ENCODE measurements at regions of chr1 and their contacts with region 1.

Region 1: GRCh38 chr1:243946946-243947345 is 96.9 kb upstream of the AKT3 start:
- DNase-seq: peak; percentile 55
- H3K4me3 Mint-ChIP-seq: no peak overlapping the region
- H3K27ac Mint-ChIP-seq: no peak overlapping the region
- H3K4me1 Mint-ChIP-seq: no peaks in the 10 kb centered on the region
- H3K27me3 Mint-ChIP-seq: no peaks in the 10 kb centered on the region
- CTCF ChIP-seq: peak; percentile 59

Region 2: GRCh38 chr1:243708210-243708609 is 238.7 kb before region 1 on chr1:
- CTCF ChIA-PET with region 1: interaction called, 4 read pairs
- POLR2A ChIA-PET with region 1: no interaction called
- intact Hi-C with region 1: loop called (anchors 5 kb)
- DNase-seq: peak; percentile 32
- H3K4me3 Mint-ChIP-seq: no peak overlapping the region
- H3K27ac Mint-ChIP-seq: no peak overlapping the region
- H3K4me1 Mint-ChIP-seq: no peaks in the 10 kb centered on the region
- H3K27me3 Mint-ChIP-seq: no peaks in the 10 kb centered on the region
- CTCF ChIP-seq: peak; percentile 79

Region 3: GRCh38 chr1:243903895-243904294 is 43.1 kb before region 1 on chr1:
- CTCF ChIA-PET with region 1: no interaction called
- POLR2A ChIA-PET with region 1: no interaction called
- intact Hi-C with region 1: no loop called
- DNase-seq: peak; percentile 51
- H3K4me3 Mint-ChIP-seq: no peak overlapping the region
- H3K27ac Mint-ChIP-seq: no peak overlapping the region
- H3K4me1 Mint-ChIP-seq: no peaks in the 10 kb centered on the region
- H3K27me3 Mint-ChIP-seq: peaks cover 65% of the 10 kb centered on the region
- CTCF ChIP-seq: no peak

Region 4: DNA sequence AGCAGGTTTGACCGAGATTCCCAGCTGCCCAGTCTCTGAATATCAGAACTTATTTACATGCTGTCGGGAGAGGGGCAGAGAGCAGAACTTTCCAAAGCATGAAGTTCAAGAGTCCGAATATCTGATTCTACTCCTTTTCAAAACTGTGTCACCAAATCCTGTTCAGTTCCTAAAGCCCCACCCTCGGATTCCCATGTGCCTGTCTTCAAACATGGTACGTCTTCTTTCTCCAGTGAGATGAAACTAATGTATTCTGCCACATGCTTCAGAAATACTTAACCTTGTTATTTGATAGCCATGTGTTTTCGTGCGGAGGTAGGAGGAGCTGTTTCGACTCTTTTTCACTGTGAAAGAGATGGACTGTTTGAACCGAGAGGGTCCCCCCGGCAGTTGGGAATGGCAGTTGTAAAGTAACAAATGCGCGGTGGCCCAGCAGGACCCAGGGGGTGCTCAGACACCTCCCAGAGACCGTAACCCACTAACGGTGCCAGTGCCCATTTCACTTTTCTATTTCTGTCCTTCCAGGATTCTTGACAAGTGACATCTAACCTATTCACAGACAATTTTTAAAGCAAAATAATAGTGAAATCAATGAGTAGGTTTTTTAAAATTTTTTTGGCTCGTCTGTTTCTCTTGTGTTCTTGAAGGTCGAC is 171.3 kb after region 1 on chr1:
- CTCF ChIA-PET with region 1: no interaction called
- POLR2A ChIA-PET with region 1: no interaction called
- intact Hi-C with region 1: no loop called
- DNase-seq: no peak
- H3K4me3 Mint-ChIP-seq: no peak overlapping the region
- H3K27ac Mint-ChIP-seq: no peak overlapping the region
- H3K4me1 Mint-ChIP-seq: no peaks in the 10 kb centered on the region
- H3K27me3 Mint-ChIP-seq: peaks cover 38% of the 10 kb centered on the region
- CTCF ChIP-seq: no peak